IMR-90 (cell line): ENCODE measurements at regions of chr3 and their contacts with region 1.

Region 1: DNA sequence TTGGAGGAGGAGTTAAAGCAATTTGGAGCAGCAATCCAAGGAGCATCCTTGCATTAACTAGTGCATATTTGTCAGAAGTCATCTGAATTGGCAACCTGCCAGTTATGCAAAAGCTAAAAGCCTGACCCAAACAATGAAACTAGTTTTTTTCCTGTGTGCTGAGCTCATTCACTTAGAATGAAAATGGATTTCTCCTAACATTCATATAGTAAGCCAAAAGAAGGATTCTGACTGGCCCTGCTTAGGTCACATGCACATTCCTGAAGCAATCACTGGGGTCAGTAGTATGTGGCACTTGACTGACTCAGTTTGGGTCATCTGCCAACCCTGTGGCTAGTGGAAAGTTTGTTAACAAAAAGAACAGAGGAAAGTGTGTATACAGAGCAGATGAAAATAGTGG is 30.5 kb downstream of the OXSM start:
- DNase-seq: peak; percentile 99
- ATAC-seq: peak; percentile 97
- H3K4me3 ChIP-seq: no peak overlapping the region
- H3K27ac ChIP-seq: no peak overlapping the region
- H3K4me1 ChIP-seq: no peaks in the 10 kb centered on the region
- H3K27me3 ChIP-seq: peaks cover 2% of the 10 kb centered on the region
- CTCF ChIP-seq: no peak
- POLR2A ChIP-seq: no peak
- RAD21 ChIP-seq: no peak

Region 2: GRCh38 chr3:25664810-25665314 is 155.5 kb before region 1 on chr3 and contains the start of gene TOP2B:
- CTCF ChIA-PET with region 1: no interaction called
- POLR2A ChIA-PET with region 1: no interaction called
- dilution Hi-C with region 1: no loop called
- in situ Hi-C with region 1: no loop called
- intact Hi-C with region 1: loop called (anchors 5 kb)
- DNase-seq: peak; percentile 95
- ATAC-seq: peak; percentile 93
- H3K4me3 ChIP-seq: peak within 1 kb of the TSS; percentile 80
- H3K27ac ChIP-seq: peak within 1 kb of the TSS; percentile 96
- H3K4me1 ChIP-seq: peaks cover 2% of the 10 kb centered on the region
- H3K27me3 ChIP-seq: no peaks in the 10 kb centered on the region
- CTCF ChIP-seq: no peak
- POLR2A ChIP-seq: peak; percentile 68; the same call in 1 of the 2 replicates
- RAD21 ChIP-seq: no peak
- total RNA-seq, gene TOP2B: 53.4 and 115 TPM in 2 replicates

Region 3: DNA sequence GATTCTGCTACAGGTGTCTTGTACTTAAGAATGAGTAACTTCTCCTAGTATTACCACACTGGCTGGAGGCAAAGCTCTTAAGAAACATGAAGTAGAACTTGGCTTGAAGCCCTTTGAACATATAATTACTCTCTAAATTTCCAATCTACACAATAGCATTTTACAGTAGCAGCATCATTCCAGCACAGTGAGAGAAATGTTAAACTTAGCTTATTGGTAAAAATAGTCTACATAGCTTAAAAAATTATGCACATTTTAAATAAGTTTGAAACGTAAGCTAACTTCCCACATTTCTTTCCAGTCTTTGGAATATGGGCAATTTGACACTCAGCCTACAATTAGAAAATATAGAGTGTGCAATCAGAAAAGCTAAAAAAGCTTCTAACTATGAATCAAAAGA is 122.8 kb before region 1 on chr3:
- CTCF ChIA-PET with region 1: no interaction called
- POLR2A ChIA-PET with region 1: no interaction called
- dilution Hi-C with region 1: no loop called
- in situ Hi-C with region 1: no loop called
- intact Hi-C with region 1: no loop called
- DNase-seq: no peak
- ATAC-seq: no peak
- H3K4me3 ChIP-seq: no peak overlapping the region
- H3K27ac ChIP-seq: no peak overlapping the region
- H3K4me1 ChIP-seq: no peaks in the 10 kb centered on the region
- H3K27me3 ChIP-seq: no peaks in the 10 kb centered on the region
- CTCF ChIP-seq: no peak
- POLR2A ChIP-seq: no peak
- RAD21 ChIP-seq: no peak

Region 4: DNA sequence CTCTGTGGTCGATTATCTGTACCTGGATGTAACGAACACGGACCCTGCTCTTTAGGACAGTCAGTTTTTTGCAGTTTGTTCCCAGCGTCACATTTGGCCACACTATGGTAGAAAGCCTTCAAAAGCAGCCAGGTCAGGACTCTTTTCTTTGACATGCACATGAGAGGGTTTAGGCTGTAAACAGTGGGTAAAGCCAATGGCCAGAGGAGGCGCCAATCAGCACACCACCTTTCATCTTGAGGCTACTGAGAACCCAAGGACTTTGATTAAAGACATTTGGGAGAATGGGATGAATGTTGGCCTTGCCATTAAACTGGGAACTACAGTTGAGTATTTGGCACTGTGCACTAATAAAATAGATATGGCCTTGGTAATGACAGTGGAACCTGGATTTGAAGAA is 195.4 kb after region 1 on chr3:
- CTCF ChIA-PET with region 1: no interaction called
- POLR2A ChIA-PET with region 1: no interaction called
- dilution Hi-C with region 1: no loop called
- in situ Hi-C with region 1: no loop called
- intact Hi-C with region 1: no loop called
- DNase-seq: no peak
- ATAC-seq: no peak
- H3K4me3 ChIP-seq: no peak overlapping the region
- H3K27ac ChIP-seq: no peak overlapping the region
- H3K4me1 ChIP-seq: no peaks in the 10 kb centered on the region
- H3K27me3 ChIP-seq: no peaks in the 10 kb centered on the region
- CTCF ChIP-seq: no peak
- POLR2A ChIP-seq: no peak
- RAD21 ChIP-seq: no peak